Prostate gland (tissue), 2 donors: ENCODE measurements at regions of chr16 and their contacts with region 1.

Region 1: GRCh38 chr16:8572919-8573724 is 17.2 kb downstream of the TMEM114 start:
- DNase-seq: no peak
- H3K4me3 ChIP-seq: no peak overlapping the region
- H3K27ac ChIP-seq: no peak overlapping the region
- H3K4me1 ChIP-seq: no peaks in the 10 kb centered on the region
- H3K27me3 ChIP-seq: no peaks in the 10 kb centered on the region
- CTCF ChIP-seq: peak in 3 of 4 experiments; percentile 7 to 34 (median 23)
- POLR2A ChIP-seq: no peak

Region 2: GRCh38 chr16:8621572-8622314 is 48.6 kb after region 1 on chr16 and contains the start of gene METTL22:
- intact Hi-C with region 1: loop called (anchors 10 kb)
- DNase-seq: peak; percentile 81
- H3K4me3 ChIP-seq: peak within 1 kb of the TSS; percentile 87 to 92
- H3K27ac ChIP-seq: peak within 1 kb of the TSS; percentile 80 to 81
- H3K4me1 ChIP-seq: peaks cover 4% of the 10 kb centered on the region
- H3K27me3 ChIP-seq: no peaks in the 10 kb centered on the region
- CTCF ChIP-seq: peak in 2 of 4 experiments; percentile 12 to 26
- POLR2A ChIP-seq: peak; percentile 81
- total RNA-seq, gene METTL22: 16.3 to 56.6 TPM

Region 3: DNA sequence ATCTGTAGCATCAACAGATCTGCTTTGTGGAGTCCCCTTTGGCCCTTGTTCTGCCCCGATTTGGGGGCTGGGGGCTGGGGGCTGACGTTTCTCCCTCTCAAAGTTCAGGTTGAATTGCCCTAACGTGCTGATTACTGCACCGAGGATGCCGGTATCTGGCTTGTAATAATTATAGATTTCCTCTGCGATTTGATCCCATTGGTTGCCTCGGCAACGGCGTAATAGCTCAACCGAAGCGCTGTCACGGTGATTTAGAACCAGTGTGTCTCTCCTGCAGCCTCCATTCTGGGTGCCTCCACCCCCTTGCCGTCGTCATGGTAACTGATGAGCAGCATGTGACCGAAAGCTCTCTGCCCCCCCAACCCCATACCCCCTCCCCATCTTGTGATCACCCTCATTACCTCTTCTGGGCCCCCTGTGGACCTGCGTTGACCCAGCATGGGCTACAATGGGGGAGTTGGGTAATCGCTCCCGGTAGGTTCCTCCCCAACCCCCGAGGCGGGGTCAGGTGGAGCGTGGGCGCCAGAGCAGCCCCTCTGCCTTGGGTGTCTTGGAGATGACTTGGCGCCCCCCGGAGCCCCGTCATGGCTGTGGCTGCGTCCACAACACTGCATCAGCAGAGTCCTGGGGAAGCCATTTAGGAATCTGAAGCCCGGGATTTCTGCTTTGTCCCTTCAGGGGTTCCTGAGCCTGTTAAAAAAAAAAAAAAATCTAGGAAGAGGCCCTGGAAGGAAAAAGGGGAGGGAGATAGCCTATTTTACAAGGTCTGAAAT is 139.7 kb after region 1 on chr16:
- intact Hi-C with region 1: no loop called
- DNase-seq: no peak
- H3K4me3 ChIP-seq: no peak overlapping the region
- H3K27ac ChIP-seq: no peak overlapping the region
- H3K4me1 ChIP-seq: no peaks in the 10 kb centered on the region
- H3K27me3 ChIP-seq: no peaks in the 10 kb centered on the region
- CTCF ChIP-seq: no peak
- POLR2A ChIP-seq: no peak

Region 4: DNA sequence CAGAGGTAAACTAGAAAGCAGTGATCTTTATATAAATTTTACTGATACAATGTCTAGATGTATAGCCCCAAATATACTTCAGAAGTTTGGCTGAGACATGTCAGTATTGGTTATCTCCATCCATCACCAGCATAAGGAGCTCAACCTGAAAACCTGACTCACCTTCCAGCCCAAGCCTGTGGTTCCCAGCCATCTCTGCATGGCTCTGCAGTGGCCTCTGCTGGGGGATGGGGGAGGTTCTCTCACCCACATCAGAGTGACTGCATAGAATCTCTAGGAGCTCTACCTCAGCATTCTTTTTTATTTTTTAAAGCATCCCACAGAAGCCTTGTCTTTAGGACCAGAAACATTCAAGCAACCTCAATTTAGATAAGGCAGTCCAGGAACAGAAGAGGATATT is 363.3 kb after region 1 on chr16:
- intact Hi-C with region 1: no loop called
- DNase-seq: peak; percentile 13
- H3K4me3 ChIP-seq: no peak overlapping the region
- H3K27ac ChIP-seq: no peak overlapping the region
- H3K4me1 ChIP-seq: no peaks in the 10 kb centered on the region
- H3K27me3 ChIP-seq: no peaks in the 10 kb centered on the region
- CTCF ChIP-seq: peak in 3 of 4 experiments; percentile 21 to 36 (median 23)
- POLR2A ChIP-seq: no peak